ENCODE measurements at regions of chr4 and their contacts with region 1.

Region 1: GRCh38 chr4:41934815-41935651 is at the start of gene TMEM33:
- DNase-seq: peak; percentile 90
- H3K4me3 ChIP-seq: peak within 1 kb of the TSS; percentile 64 to 75 (median 71)
- H3K27ac ChIP-seq: peak within 1 kb of the TSS; percentile 73
- H3K4me1 ChIP-seq: peaks cover 26% of the 10 kb centered on the region
- H3K27me3 ChIP-seq: no peaks in the 10 kb centered on the region
- CTCF ChIP-seq: peak in 1 of 2 donors; percentile 12
- total RNA-seq, gene TMEM33: 86.2 to 101 TPM

Region 2: DNA sequence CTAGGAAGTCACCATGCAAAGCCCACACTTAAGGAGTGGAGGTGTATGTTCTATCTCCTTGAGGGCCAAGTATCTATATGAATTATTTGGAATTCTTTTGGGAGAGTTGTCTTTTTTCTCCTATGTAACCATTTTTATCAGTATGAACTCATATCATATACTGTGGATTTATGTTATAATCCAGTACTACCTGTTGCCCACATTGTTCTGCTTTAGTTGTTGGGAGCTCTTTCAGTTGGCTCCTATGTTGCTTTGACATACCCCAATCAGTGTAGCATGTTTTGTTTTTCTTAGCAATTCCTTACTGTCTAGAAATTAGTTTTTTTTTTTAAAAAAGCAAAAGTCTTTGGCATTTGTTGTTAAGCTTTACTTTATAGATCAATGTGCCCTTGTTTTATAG is 665.4 kb before region 1 on chr4:
- CTCF ChIA-PET with region 1: interaction called, 10 read pairs
- dilution Hi-C with region 1: no loop called
- in situ Hi-C with region 1: no loop called
- intact Hi-C with region 1: no loop called
- DNase-seq: no peak
- H3K4me3 ChIP-seq: no peak overlapping the region
- H3K27ac ChIP-seq: no peak overlapping the region
- H3K4me1 ChIP-seq: no peaks in the 10 kb centered on the region
- H3K27me3 ChIP-seq: no peaks in the 10 kb centered on the region
- CTCF ChIP-seq: no peak

Region 3: DNA sequence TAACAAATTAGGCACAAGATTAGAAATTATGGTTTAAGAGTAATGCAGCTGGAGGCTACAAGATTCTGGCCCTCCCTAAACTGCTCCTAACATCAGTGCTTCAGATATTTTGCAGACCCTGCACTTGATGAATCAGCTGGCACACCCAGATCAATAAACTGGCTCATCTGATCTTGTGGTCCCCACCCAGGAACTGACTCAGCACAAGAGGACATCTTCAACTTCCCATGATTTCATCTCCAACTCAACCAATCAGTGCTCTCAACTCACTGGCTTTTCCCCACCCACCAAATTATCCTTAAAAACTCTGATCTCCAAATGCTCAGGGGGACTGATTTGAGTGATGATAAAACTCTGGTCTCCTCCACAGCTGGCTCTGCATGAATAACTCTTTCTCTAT is 21.5 kb before region 1 on chr4:
- CTCF ChIA-PET with region 1: no interaction called
- dilution Hi-C with region 1: no loop called
- in situ Hi-C with region 1: no loop called
- intact Hi-C with region 1: no loop called
- DNase-seq: peak; percentile 40
- H3K4me3 ChIP-seq: no peak overlapping the region
- H3K27ac ChIP-seq: no peak overlapping the region
- H3K4me1 ChIP-seq: peaks cover 15% of the 10 kb centered on the region
- H3K27me3 ChIP-seq: no peaks in the 10 kb centered on the region
- CTCF ChIP-seq: no peak

Region 4: DNA sequence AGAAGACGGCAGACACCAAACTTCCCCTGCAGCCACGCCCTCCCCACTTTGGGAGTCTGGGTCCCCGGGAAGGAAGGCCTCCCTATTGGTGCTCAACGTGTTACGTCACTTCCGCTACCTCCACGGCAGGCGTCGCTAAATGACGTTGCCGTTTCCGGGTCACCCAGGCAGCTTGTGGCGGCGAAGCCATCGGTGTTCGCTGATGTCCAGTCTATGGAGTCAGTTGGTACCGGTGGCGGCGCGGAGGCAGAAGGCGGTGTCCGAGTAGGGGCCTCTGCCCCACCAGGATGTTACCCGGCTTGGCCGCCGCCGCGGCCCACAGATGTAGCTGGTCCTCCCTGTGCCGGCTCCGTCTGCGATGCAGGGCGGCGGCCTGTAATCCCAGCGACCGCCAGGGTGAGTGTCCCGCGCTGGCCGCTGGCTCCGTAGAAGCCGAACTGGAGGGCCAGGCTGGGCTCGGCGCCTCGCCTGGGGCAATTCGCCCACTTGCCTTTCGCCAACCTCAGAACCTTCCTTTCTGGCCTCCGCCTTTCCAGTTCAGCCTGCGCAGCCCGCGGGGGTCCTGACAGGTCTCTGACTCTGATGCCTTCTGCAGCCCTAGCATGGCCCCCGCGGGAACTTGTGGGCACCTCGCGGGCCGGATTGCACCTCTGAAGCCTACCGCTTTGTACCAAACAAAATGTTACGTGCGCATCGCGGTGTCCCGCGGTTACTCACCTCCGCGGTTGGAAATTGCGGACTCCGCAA is 55.5 kb after region 1 on chr4 and contains the start of gene SLC30A9:
- CTCF ChIA-PET with region 1: no interaction called
- dilution Hi-C with region 1: no loop called
- in situ Hi-C with region 1: no loop called
- intact Hi-C with region 1: loop called (anchors 5 kb)
- DNase-seq: peak; percentile 92
- H3K4me3 ChIP-seq: peak within 1 kb of the TSS; percentile 64 to 94 (median 75)
- H3K27ac ChIP-seq: peak within 1 kb of the TSS; percentile 80
- H3K4me1 ChIP-seq: peaks cover 10% of the 10 kb centered on the region
- H3K27me3 ChIP-seq: no peaks in the 10 kb centered on the region
- CTCF ChIP-seq: peak in 1 of 2 donors; percentile 45
- total RNA-seq, gene SLC30A9: 60.9 to 61.2 TPM

Region 5: GRCh38 chr4:42709392-42710091 is 774.5 kb after region 1 on chr4:
- CTCF ChIA-PET with region 1: interaction called, 11 read pairs
- dilution Hi-C with region 1: no loop called
- in situ Hi-C with region 1: no loop called
- intact Hi-C with region 1: no loop called
- DNase-seq: no peak
- H3K4me3 ChIP-seq: no peak overlapping the region
- H3K27ac ChIP-seq: no peak overlapping the region
- H3K4me1 ChIP-seq: no peaks in the 10 kb centered on the region
- H3K27me3 ChIP-seq: no peaks in the 10 kb centered on the region
- CTCF ChIP-seq: no peak